ENCODE measurements at regions of chr1 and their contacts with region 1.

Region 1: DNA sequence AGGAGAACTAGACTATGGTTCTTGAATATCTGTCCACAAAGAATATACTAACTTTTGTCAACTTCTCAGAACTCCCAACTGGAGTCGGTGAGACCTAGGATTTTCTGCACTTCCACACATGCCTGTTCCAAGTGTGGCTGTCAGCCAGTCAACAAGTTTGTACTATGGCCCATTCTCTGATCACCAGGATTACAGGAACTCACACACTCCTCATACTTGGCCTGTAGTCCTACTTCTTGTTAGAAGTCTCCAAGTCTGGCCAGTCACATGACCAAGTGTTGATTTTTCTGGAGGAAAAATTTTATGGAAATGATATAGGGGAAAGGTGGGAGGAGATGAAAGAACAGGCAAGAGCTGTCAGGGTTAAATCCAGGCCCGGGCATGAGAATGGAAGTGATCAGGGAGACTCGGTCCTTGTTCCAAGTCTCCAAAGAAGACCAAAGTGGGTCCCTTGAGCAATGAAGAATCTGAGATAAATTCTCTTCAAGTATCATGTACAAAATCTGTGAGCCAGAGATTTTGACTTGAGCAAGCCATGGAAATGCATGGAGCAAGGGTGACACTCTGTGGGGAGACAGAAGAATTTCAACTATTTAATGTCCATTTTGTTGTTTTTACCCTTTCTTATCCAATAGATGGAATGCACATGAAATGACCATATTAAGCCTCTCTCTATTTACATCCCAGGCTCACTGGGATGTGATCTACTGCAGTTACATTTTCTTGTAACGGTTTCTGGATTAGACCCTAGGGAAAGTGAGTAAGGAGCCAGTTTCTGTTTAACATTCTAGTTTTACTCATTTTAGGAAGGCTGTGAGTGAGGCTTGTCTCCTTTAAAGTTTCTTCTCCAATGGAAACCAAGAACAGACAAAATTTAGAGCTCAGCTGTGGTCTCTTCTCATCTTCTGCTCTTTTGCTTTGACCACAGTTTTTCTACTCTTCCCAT is 320.9 kb downstream of the ASTN1 start:
- DNase-seq: peak in 1 of 10 donors; percentile 27
- H3K4me3 ChIP-seq: no peak overlapping the region
- H3K27ac ChIP-seq: no peak overlapping the region
- H3K27me3 ChIP-seq: no peaks in the 10 kb centered on the region
- CTCF ChIP-seq: peak; percentile 36 to 87 (median 66)

Region 2: DNA sequence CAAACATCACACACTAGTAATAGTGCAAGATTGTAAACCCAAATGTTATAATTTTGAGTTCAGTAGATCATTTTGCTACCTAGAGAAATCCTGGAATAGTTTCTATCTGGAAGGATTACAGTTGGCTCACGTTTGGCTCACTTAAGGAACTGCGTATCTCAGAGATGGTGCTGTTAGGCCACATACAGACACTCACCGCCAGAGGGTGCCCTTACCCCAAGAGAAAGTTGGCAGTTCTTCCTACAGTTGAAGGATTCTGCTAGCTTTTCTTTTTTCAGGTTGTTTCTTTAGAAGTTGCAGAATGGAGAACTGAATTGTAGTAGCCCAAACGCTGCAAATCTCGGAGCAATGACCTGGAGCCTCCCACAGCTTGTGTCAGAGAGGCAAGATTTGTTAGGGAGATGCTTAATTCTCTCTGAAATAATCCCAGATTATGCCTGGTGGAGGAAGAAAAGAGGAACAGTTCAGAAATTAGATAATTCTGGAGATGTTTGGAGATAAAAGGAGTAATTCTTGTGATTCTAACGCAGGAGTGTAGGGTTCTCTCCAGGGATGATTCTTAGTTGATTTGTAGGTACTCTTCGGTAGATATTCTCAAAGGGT is 468.6 kb before region 1 on chr1:
- intact Hi-C with region 1: loop called (anchors 2 to 5 kb)
- DNase-seq: peak; percentile 58 to 86 (median 70)
- H3K4me3 ChIP-seq: no peak overlapping the region
- H3K27ac ChIP-seq: no peak overlapping the region
- H3K27me3 ChIP-seq: no peaks in the 10 kb centered on the region
- CTCF ChIP-seq: peak; percentile 64 to 93 (median 86)